HCT116 (cell line): ENCODE measurements at regions of chr14 and their contacts with region 1.

Region 1: GRCh38 chr14:61103481-61104339 is 122.7 kb downstream of the SLC38A6 start:
- DNase-seq: peak; percentile 76
- ATAC-seq: peak; percentile 85
- H3K4me3 ChIP-seq: peak overlapping the region; percentile 11 to 55
- H3K27ac ChIP-seq: peak overlapping the region; percentile 91
- H3K4me1 ChIP-seq: peaks cover 27 to 39% of the 10 kb centered on the region in 2 experiments
- H3K27me3 ChIP-seq: no peaks in the 10 kb centered on the region
- CTCF ChIP-seq: no peak
- POLR2A ChIP-seq: no peak
- RAD21 ChIP-seq: peak; percentile 37; the same call in 1 of the 2 replicates

Region 2: DNA sequence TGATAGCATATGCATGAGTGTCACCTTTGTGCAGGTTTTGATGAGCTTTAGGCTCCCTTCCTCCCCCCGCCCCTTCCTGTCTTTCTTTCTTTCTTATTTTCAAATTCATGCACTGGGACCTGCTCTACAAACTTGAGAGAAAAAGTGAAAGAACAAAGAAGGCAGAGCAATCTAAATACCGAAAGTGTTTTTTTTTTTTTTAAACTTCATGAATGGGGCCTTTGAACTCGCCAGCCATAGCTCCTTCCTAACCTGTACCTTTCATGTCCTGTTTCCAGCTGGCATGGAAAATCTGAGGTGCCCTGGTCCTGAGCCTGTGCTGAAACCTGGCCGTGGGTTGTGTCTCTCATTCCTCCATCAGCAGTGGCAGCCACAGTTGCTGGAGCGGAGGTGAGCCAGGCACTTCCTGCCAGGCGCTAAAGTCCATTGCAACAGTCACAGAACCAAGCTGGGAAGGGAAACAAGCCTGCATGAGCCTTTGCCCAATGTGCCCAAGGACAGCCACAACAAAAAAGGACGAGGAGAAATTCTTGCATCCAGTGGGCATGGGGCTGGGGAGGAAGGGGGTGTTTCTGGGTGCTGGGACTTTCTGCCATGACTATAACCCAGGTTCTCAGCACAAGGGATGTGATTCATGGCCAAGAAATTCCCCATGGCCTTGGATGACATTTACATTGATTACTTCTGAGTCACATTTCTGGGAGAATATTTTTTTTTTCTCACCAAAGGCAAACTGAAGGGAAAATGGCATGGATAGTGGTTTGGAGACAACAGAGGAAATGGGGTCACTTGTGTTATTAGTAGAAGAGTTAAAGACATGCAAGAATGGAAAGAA is 74.7 kb after region 1 on chr14:
- CTCF ChIA-PET with region 1: no interaction called
- POLR2A ChIA-PET with region 1: no interaction called
- RAD21 ChIA-PET with region 1: no interaction called
- intact Hi-C with region 1: loop called (anchors 5 kb)
- DNase-seq: peak; percentile 83
- ATAC-seq: peak; percentile 79
- H3K4me3 ChIP-seq: peak overlapping the region; percentile 15 to 45
- H3K27ac ChIP-seq: peak overlapping the region; percentile 95
- H3K4me1 ChIP-seq: peaks cover 34 to 46% of the 10 kb centered on the region in 2 experiments
- H3K27me3 ChIP-seq: no peaks in the 10 kb centered on the region
- CTCF ChIP-seq: no peak
- POLR2A ChIP-seq: no peak
- RAD21 ChIP-seq: peak; percentile 22; the same call in 1 of the 2 replicates